ENCODE measurements at regions of chr14 and their contacts with region 1.

Region 1: DNA sequence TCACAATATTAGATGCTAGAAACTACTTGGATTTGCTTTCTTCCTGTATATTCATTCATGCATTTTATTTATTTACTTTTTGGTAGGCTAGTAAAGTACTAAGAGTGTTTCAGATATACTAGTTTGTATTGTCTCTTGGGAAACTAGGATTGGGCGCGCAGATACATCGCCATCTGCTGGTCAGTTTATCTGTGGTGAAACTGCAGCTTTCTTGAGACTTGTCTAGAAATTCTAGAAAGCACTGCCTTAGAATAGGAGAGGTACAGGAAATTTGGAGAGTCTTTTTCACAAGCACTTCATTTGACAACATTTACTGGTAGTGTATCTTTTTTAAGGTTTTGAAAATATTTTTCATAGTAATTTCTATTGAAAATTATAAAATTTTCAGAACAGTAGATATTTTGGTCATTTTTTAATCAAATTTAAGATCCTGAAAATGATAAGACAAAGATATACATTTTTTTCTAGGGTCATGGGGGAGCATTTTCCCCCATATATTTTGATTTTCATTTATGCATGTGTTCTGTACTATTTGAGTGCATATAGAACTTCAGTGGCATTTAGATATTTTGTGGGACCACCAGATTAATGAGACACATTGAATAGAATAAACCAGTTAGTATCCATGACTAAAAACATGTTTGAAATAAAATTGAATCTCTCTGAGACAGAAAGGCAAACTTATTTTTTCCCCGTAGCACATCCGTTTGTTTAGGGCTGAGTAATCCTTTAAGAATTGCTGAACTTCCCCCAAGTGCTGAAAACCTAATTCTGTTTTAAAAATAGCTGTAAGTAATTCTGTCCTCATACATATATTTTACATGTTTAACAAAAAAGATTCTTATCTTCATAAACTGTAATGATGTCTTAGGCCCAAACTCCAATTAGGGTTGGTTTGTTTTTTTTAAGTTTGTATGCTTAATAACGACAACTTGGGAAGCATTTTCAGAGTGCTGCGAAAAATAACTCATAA is 44.5 kb downstream of the SLC38A6 start:
- DNase-seq: no peak
- ATAC-seq: peak; percentile 57
- H3K4me3 Mint-ChIP-seq: no peak overlapping the region
- H3K27ac Mint-ChIP-seq: no peak overlapping the region
- H3K4me1 Mint-ChIP-seq: peaks cover under 1% of the 10 kb centered on the region
- H3K27me3 Mint-ChIP-seq: no peaks in the 10 kb centered on the region
- CTCF ChIP-seq: peak; percentile 83

Region 2: DNA sequence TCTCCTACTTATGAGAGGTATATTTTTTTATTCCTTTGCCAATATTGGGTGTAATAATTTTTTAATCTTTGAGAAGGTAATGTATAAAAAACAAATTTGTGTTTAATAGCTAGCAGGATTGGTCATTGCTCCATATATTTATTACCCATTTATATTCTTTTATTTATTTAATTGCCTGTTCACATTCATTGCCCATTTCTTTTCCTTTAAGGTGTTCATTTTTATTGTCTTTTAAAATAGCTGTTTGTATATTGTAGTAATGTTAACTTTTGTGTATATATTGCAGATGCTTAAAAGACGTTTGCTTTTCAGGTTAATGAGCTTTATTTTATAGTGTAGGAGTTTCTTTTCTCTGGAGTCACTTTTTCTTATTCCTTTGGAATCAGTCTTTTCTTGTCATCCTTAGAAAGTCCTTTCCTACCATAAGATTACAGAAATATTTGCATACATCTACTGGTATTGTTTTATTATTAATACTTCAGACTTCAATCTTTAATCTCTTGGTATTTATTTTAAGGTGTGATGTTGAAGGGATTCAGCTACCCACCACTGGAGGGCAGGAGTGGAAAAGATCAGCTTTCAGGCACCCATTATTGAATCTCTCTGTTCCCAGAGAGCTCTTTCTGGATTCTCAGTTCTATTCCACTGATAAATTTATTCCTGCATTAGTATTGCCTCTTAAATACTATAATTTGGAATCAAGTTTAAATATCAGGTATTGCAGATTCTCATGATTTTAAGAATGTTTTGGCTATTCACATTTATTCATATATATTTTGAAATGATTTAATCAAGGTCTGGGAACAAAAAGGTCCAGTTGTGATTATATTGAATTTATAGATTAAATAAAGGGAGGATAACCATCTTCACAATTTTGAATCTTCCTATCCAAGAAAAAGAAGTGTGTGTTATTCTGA is 759.3 kb before region 1 on chr14:
- CTCF ChIA-PET with region 1: no interaction called
- POLR2A ChIA-PET with region 1: no interaction called
- intact Hi-C with region 1: loop called (anchors 10 kb)
- DNase-seq: no peak
- ATAC-seq: peak; percentile 54
- H3K4me3 Mint-ChIP-seq: no peak overlapping the region
- H3K27ac Mint-ChIP-seq: no peak overlapping the region
- H3K4me1 Mint-ChIP-seq: peaks cover 22% of the 10 kb centered on the region
- H3K27me3 Mint-ChIP-seq: no peaks in the 10 kb centered on the region
- CTCF ChIP-seq: no peak

Region 3: DNA sequence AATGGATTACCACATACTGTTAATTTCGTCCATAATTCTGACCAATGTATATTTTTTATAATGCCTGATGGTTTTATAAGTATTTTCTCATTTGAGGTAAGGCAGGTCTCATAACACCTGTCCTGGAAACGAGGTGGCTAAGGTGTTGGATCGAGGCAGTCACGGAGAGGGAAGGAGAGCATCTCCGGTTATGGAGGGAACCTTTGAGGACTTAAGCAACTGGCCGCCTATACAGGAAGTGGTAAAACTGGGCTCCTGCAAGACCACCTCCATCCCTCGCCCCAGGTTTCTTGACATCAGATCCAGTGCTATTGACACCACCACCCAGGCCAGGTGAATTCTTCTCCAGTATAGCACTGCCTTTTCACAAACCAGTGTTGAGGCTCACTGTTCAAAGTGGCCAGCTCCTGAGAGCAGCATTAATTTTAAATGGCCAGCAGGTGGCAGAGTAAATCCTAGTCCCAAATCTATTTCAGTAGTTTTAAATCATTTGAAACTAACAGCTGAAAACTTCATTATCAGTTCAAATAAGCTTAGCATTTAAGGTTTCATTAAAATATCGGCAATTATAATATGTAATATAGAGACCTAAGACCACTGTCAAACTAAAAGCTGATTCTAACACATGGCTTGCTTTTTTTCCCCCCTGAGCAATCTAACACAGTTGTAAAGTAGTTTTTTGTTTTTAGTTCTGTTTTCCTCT is 675.7 kb before region 1 on chr14:
- CTCF ChIA-PET with region 1: interaction called, 3 read pairs
- POLR2A ChIA-PET with region 1: no interaction called
- intact Hi-C with region 1: loop called (anchors 1 kb)
- DNase-seq: no peak
- ATAC-seq: no peak
- H3K4me3 Mint-ChIP-seq: no peak overlapping the region
- H3K27ac Mint-ChIP-seq: no peak overlapping the region
- H3K4me1 Mint-ChIP-seq: peaks cover 3% of the 10 kb centered on the region
- H3K27me3 Mint-ChIP-seq: peaks cover 9% of the 10 kb centered on the region
- CTCF ChIP-seq: no peak

Region 4: GRCh38 chr14:60622917-60623257 is 402.6 kb before region 1 on chr14:
- CTCF ChIA-PET with region 1: interaction called, 59 read pairs
- POLR2A ChIA-PET with region 1: no interaction called
- intact Hi-C with region 1: loop called (anchors 1 kb)
- DNase-seq: no peak
- ATAC-seq: no peak
- H3K4me3 Mint-ChIP-seq: no peak overlapping the region
- H3K27ac Mint-ChIP-seq: no peak overlapping the region
- H3K4me1 Mint-ChIP-seq: peaks cover 5% of the 10 kb centered on the region
- H3K27me3 Mint-ChIP-seq: peaks cover 17% of the 10 kb centered on the region
- CTCF ChIP-seq: no peak

Region 5: DNA sequence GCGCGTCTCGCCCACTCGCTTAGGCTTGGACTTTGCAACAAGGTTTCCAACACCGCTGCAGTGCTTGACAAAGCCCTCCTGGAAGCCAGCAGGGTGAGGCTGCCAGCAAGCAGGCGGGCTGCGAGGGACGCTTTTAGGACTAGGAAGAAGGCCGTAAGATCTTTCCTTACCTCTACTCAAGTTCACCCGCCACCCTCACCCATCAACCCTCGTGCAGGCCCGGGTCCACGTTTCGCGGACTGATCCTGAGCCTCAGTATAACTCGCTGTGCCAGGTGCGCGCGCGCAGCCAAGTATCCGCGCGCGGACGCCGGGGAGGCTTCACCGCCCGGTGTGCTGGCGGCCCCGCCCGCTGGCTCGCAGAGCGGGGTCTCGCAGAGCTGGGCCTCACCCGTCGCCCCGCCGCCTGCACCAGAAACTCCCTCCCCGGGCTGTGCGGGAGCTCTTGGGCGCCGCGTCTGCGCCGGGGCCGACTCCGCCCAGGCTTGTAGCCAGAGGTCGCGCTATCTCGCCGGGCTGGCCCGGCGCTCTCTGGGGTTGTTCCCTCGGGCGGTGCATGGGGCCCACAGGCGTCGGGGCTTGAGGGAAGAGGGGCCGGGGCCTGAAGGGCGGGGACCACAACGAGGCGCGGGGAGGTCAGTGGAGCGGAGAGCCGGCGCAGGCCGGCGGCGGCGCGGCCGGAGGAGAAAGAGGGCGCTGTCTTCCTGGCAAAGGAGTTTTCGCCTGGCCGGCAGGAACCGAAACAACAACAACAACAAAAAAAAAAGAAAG is 368.7 kb before region 1 on chr14:
- CTCF ChIA-PET with region 1: interaction called, 10 read pairs
- POLR2A ChIA-PET with region 1: no interaction called
- intact Hi-C with region 1: loop called (anchors 1 kb)
- DNase-seq: peak; percentile 58
- ATAC-seq: peak; percentile 88
- H3K4me3 Mint-ChIP-seq: peak overlapping the region; percentile 90
- H3K27ac Mint-ChIP-seq: no peak overlapping the region
- H3K4me1 Mint-ChIP-seq: peaks cover 39% of the 10 kb centered on the region
- H3K27me3 Mint-ChIP-seq: peaks cover 68% of the 10 kb centered on the region
- CTCF ChIP-seq: no peak

Region 6: GRCh38 chr14:60724137-60724619 is 301.4 kb before region 1 on chr14 and contains the start of gene SIX4:
- CTCF ChIA-PET with region 1: no interaction called
- POLR2A ChIA-PET with region 1: no interaction called
- intact Hi-C with region 1: loop called (anchors 2 kb)
- DNase-seq: no peak
- ATAC-seq: peak; percentile 26
- H3K4me3 Mint-ChIP-seq: peak within 1 kb of the TSS; percentile 87
- H3K27ac Mint-ChIP-seq: no peak within 1 kb of the TSS
- H3K4me1 Mint-ChIP-seq: peaks cover 22% of the 10 kb centered on the region
- H3K27me3 Mint-ChIP-seq: peaks cover 73% of the 10 kb centered on the region
- CTCF ChIP-seq: no peak
- total RNA-seq, gene SIX4: not detected in 2 replicates

Region 7: GRCh38 chr14:61106959-61107641 is 81.6 kb after region 1 on chr14:
- CTCF ChIA-PET with region 1: no interaction called
- POLR2A ChIA-PET with region 1: no interaction called
- intact Hi-C with region 1: no loop called
- DNase-seq: no peak
- ATAC-seq: no peak
- H3K4me3 Mint-ChIP-seq: no peak overlapping the region
- H3K27ac Mint-ChIP-seq: no peak overlapping the region
- H3K4me1 Mint-ChIP-seq: peaks cover 11% of the 10 kb centered on the region
- H3K27me3 Mint-ChIP-seq: peaks cover 2% of the 10 kb centered on the region
- CTCF ChIP-seq: no peak

Region 8: GRCh38 chr14:61252369-61253063 is 227.0 kb after region 1 on chr14:
- CTCF ChIA-PET with region 1: interaction called, 3 read pairs
- POLR2A ChIA-PET with region 1: no interaction called
- intact Hi-C with region 1: loop called (anchors 1 kb)
- DNase-seq: no peak
- ATAC-seq: peak; percentile 85
- H3K4me3 Mint-ChIP-seq: no peak overlapping the region
- H3K27ac Mint-ChIP-seq: no peak overlapping the region
- H3K4me1 Mint-ChIP-seq: peaks cover 9% of the 10 kb centered on the region
- H3K27me3 Mint-ChIP-seq: peaks cover 5% of the 10 kb centered on the region
- CTCF ChIP-seq: peak; percentile 43

Measured in activated B cell treated with CpG ODN at 0.5 μM for 24 hours (primary cell).